GM12878 (cell line): ENCODE measurements at regions of chr9 and their contacts with region 1.

Region 1: GRCh38 chr9:122991370-122991830 is 42.1 kb upstream of the GPR21 start:
- DNase-seq: peak; percentile 23
- ATAC-seq: peak; percentile 84
- H3K4me3 ChIP-seq: no peak overlapping the region
- H3K27ac ChIP-seq: no peak overlapping the region
- H3K4me1 ChIP-seq: no peaks in the 10 kb centered on the region
- H3K27me3 ChIP-seq: no peaks in the 10 kb centered on the region
- CTCF ChIP-seq: peak; percentile 57 to 64 (median 60)
- EP300 ChIP-seq: no peak
- POLR2A ChIP-seq: no peak
- RAD21 ChIP-seq: peak; percentile 76

Region 2: GRCh38 chr9:122464633-122465567 is 526.5 kb before region 1 on chr9:
- CTCF ChIA-PET with region 1: interaction called, 5 read pairs
- POLR2A ChIA-PET with region 1: no interaction called
- RAD21 ChIA-PET with region 1: interaction called, 3 read pairs
- SMC1A ChIA-PET with region 1: interaction called, 4 read pairs
- in situ Hi-C with region 1: no loop called
- intact Hi-C with region 1: loop called (anchors 10 kb)
- DNase-seq: peak; percentile 45
- ATAC-seq: peak; percentile 84
- H3K4me3 ChIP-seq: peak overlapping the region; percentile 54; the same call in 1 of the 2 replicates
- H3K27ac ChIP-seq: peak overlapping the region; percentile 4; the same call in 1 of the 2 replicates
- H3K4me1 ChIP-seq: no peaks in the 10 kb centered on the region
- H3K27me3 ChIP-seq: no peaks in the 10 kb centered on the region; a peak in 1 of 4 replicates
- CTCF ChIP-seq: peak; percentile 76 to 81 (median 79)
- EP300 ChIP-seq: no peak
- POLR2A ChIP-seq: no peak
- RAD21 ChIP-seq: peak; percentile 77

Region 3: DNA sequence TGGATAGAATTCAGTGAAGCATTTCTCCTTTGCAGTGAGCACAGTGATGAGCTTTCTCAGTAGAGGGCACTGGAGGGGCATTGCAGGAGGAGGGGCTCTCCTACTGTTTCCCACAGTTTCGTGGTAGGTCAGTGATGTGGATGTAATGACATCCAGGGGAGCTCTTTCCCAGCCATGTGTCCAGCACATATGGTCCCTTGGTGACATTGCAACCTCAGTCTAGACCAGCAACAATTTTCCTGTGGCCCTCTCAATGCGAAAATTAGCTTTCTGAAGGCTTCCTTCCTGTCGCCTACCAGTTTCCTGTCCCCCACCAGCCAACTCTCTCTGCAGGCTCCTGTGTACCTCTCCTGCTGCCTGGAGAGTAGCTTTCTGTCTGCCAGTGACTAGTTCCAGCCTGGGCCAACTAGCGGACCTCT is 156.1 kb before region 1 on chr9:
- CTCF ChIA-PET with region 1: interaction called, 12 read pairs
- POLR2A ChIA-PET with region 1: no interaction called
- RAD21 ChIA-PET with region 1: interaction called, 6 read pairs
- SMC1A ChIA-PET with region 1: interaction called, 8 read pairs
- in situ Hi-C with region 1: no loop called
- intact Hi-C with region 1: no loop called
- DNase-seq: no peak
- ATAC-seq: peak; percentile 41
- H3K4me3 ChIP-seq: no peak overlapping the region
- H3K27ac ChIP-seq: no peak overlapping the region
- H3K4me1 ChIP-seq: peaks cover 4% of the 10 kb centered on the region
- H3K27me3 ChIP-seq: no peaks in the 10 kb centered on the region
- CTCF ChIP-seq: peak in 1 of 3 experiments; percentile 21; a peak in 2 of 6 replicates
- EP300 ChIP-seq: no peak
- POLR2A ChIP-seq: no peak
- RAD21 ChIP-seq: peak; percentile 20; the same call in 1 of the 2 replicates

Region 4: GRCh38 chr9:122897969-122898368 is 93.4 kb before region 1 on chr9:
- CTCF ChIA-PET with region 1: interaction called, 10 read pairs
- POLR2A ChIA-PET with region 1: interaction called, 4 read pairs
- RAD21 ChIA-PET with region 1: interaction called, 10 read pairs
- SMC1A ChIA-PET with region 1: interaction called, 18 read pairs
- in situ Hi-C with region 1: no loop called
- intact Hi-C with region 1: loop called (anchors 2 kb)
- DNase-seq: no peak
- ATAC-seq: peak; percentile 10; the same call in 1 of the 3 replicates
- H3K4me3 ChIP-seq: no peak overlapping the region
- H3K27ac ChIP-seq: no peak overlapping the region
- H3K4me1 ChIP-seq: peaks cover 6% of the 10 kb centered on the region
- H3K27me3 ChIP-seq: no peaks in the 10 kb centered on the region
- CTCF ChIP-seq: no peak
- EP300 ChIP-seq: no peak
- POLR2A ChIP-seq: no peak
- RAD21 ChIP-seq: no peak

Region 5: GRCh38 chr9:122931226-122932121 is 59.9 kb before region 1 on chr9 and contains the start of gene ZBTB26:
- CTCF ChIA-PET with region 1: interaction called, 12 read pairs
- POLR2A ChIA-PET with region 1: no interaction called
- RAD21 ChIA-PET with region 1: interaction called, 14 read pairs
- SMC1A ChIA-PET with region 1: interaction called, 3 read pairs
- in situ Hi-C with region 1: no loop called
- intact Hi-C with region 1: no loop called
- DNase-seq: peak; percentile 74
- ATAC-seq: peak; percentile 98
- H3K4me3 ChIP-seq: peak within 1 kb of the TSS; percentile 88
- H3K27ac ChIP-seq: peak within 1 kb of the TSS; percentile 56
- H3K4me1 ChIP-seq: peaks cover 4% of the 10 kb centered on the region
- H3K27me3 ChIP-seq: no peaks in the 10 kb centered on the region
- CTCF ChIP-seq: no peak
- EP300 ChIP-seq: no peak
- POLR2A ChIP-seq: peak; percentile 88
- RAD21 ChIP-seq: no peak
- polyA plus RNA-seq, gene ZBTB26: 1.8 to 2.4 TPM

Region 6: DNA sequence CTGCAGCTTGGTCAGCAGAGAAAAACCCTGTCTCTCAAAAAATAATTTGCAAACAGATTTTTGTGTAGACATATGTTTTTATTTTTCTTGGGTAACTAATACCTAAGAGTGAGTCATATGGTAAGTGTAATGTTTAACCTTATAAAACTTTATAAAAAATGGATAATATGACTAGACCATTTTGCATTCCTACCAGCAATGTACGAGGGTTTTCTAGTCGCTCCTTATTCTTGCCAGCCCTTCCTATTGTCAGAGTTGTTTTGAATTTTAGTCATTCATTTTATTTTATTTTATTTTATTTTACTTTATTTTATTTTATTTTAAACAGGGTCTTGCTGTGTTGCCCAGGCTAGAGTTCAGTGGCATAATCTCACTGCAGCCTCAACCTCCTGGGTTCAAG is 12.8 kb before region 1 on chr9:
- CTCF ChIA-PET with region 1: interaction called, 10 read pairs
- POLR2A ChIA-PET with region 1: no interaction called
- RAD21 ChIA-PET with region 1: no interaction called
- SMC1A ChIA-PET with region 1: interaction called, 3 read pairs
- in situ Hi-C with region 1: no loop called
- intact Hi-C with region 1: no loop called
- DNase-seq: no peak
- ATAC-seq: no peak
- H3K4me3 ChIP-seq: no peak overlapping the region
- H3K27ac ChIP-seq: no peak overlapping the region
- H3K4me1 ChIP-seq: no peaks in the 10 kb centered on the region
- H3K27me3 ChIP-seq: no peaks in the 10 kb centered on the region
- CTCF ChIP-seq: no peak
- EP300 ChIP-seq: no peak
- POLR2A ChIP-seq: no peak
- RAD21 ChIP-seq: no peak